OCI-LY7 (cell line): ENCODE measurements at regions of chr1 and their contacts with region 1.

Region 1: DNA sequence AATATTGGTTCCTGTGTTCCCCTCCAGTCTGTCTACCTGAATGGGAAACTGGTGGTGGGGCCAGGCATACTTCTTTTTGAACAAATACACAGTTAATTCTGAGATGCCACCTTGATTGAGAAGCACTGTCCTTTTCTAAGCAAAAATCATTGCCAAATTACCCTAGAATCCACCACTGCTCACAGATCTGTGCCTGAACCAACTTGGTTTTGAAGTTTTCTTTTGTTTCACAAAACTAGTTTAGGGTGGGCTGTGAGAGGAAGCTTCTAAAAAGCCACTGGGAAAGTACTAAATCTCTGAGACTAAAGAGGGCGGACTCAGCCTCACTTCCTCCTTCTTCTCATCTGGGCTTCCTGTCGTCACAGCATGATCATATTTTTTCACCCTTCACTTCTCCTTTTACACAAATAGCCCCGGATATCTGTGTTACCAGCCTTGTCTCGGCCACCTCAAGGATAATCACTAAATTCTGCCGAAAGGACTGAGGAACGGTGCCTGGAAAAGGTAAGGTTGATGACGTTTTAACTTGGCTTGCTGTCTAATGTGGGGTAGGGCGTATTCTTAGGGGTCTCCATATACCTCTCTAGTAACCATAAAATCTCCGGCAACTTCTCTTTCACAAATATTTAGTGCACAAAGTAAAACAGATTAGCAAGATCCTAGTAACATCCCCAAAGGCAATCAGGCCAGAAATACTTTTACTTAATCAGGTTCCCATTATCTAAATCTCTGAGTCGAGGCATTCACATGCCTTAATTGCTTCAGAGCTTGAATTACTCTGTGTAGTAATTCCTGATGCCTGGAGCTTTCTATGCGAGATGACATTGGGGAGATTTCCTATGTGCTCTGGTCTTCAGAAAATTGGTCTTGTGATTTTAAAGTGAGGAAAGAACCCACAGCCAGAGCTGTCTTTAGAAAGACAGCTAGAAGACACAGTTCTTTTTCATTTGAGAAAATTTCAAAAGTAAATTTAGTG is at the start of gene CD53:
- DNase-seq: peak; percentile 91
- H3K4me3 ChIP-seq: peak within 1 kb of the TSS; percentile 82
- H3K27ac ChIP-seq: peak within 1 kb of the TSS; percentile 98
- H3K4me1 ChIP-seq: peaks cover 60% of the 10 kb centered on the region
- CTCF ChIP-seq: no peak
- total RNA-seq, gene CD53: 119 and 134 TPM in 2 replicates

Region 2: DNA sequence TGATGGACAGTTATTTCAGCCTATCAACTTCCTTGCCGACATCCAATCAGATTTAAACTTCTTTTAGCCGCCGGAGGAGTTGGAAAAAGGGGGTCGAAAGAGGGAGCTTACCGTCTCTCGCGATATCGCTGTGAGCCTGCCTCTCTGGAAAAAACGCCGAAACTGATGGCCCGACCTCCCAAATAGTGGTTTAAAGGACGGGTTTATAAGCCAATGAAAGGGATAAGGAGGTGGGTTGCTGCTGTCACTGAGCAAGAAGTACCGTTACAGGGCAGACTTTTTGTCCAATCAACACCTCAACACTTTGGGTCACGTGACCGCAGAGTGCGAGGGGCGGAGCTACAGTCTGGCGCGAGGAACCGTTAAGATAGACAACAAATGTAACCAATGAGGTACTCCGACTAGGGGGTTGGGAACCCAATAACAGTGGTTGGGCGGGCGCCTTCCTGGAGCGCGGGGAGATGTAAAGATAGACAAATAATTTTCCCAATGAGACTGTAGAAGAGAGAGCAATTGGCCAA is 534.1 kb before region 1 on chr1 and contains the start of gene RBM15:
- CTCF ChIA-PET with region 1: no interaction called
- POLR2A ChIA-PET with region 1: no interaction called
- intact Hi-C with region 1: loop called (anchors 10 kb)
- DNase-seq: peak; percentile 100
- H3K4me3 ChIP-seq: peak within 1 kb of the TSS; percentile 93
- H3K27ac ChIP-seq: peak within 1 kb of the TSS; percentile 92
- H3K4me1 ChIP-seq: peaks cover 28% of the 10 kb centered on the region
- CTCF ChIP-seq: no peak
- total RNA-seq, gene RBM15: 221 and 231 TPM in 2 replicates

Region 3: GRCh38 chr1:110639724-110640386 is 233.2 kb before region 1 on chr1:
- CTCF ChIA-PET with region 1: interaction called, 3 read pairs
- POLR2A ChIA-PET with region 1: interaction called, 8 read pairs
- intact Hi-C with region 1: loop called (anchors 2 kb)
- DNase-seq: no peak
- H3K4me3 ChIP-seq: no peak overlapping the region
- H3K27ac ChIP-seq: no peak overlapping the region
- H3K4me1 ChIP-seq: peaks cover 72% of the 10 kb centered on the region
- CTCF ChIP-seq: no peak

Region 4: GRCh38 chr1:110787328-110788071 is 85.5 kb before region 1 on chr1:
- CTCF ChIA-PET with region 1: interaction called, 3 read pairs
- POLR2A ChIA-PET with region 1: interaction called, 14 read pairs
- intact Hi-C with region 1: loop called (anchors 2 kb)
- DNase-seq: peak; percentile 82
- H3K4me3 ChIP-seq: peak overlapping the region; percentile 47
- H3K27ac ChIP-seq: peak overlapping the region; percentile 80
- H3K4me1 ChIP-seq: peaks cover 30% of the 10 kb centered on the region
- CTCF ChIP-seq: peak; percentile 37; the same call in 1 of the 2 replicates

Region 5: DNA sequence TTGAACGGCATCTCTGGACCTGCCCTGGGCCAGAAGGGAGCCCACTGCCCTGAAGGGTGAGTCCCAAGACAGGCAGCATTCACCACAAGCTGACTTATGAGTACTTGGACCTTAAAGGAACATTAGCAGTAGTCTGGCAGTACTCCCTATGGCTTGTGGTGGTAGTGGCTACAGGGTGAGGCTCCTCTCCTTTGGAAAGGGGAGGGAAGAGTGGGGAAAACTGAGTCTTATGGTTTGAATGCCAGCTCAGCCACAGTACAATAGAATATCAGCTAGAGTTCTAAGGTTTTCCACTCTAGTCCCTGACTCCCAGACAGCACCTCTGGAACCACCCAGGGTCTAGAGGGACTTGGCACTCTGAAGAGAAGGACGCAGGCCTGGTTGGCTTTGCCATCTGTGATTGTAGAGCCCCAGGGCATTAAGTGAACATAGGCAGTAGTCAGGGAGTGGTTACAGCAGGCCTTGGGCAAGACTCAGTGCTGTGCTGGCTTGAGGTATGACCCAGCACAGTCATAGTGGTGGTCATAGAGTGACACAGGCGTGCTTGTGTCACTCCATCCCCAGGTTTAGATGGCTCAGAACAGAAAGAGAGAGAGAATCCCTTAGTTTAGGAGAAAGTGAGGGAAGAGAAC is 30.9 kb after region 1 on chr1:
- CTCF ChIA-PET with region 1: no interaction called
- POLR2A ChIA-PET with region 1: no interaction called
- intact Hi-C with region 1: no loop called
- DNase-seq: no peak
- H3K4me3 ChIP-seq: no peak overlapping the region
- H3K27ac ChIP-seq: no peak overlapping the region
- H3K4me1 ChIP-seq: peaks cover 4% of the 10 kb centered on the region
- CTCF ChIP-seq: no peak

Region 6: GRCh38 chr1:111127923-111128643 is 255.1 kb after region 1 on chr1:
- CTCF ChIA-PET with region 1: no interaction called
- POLR2A ChIA-PET with region 1: interaction called, 3 read pairs
- intact Hi-C with region 1: loop called (anchors 5 kb)
- DNase-seq: peak; percentile 91
- H3K4me3 ChIP-seq: peak overlapping the region; percentile 65
- H3K27ac ChIP-seq: peak overlapping the region; percentile 98
- H3K4me1 ChIP-seq: peaks cover 95% of the 10 kb centered on the region
- CTCF ChIP-seq: no peak

Region 7: DNA sequence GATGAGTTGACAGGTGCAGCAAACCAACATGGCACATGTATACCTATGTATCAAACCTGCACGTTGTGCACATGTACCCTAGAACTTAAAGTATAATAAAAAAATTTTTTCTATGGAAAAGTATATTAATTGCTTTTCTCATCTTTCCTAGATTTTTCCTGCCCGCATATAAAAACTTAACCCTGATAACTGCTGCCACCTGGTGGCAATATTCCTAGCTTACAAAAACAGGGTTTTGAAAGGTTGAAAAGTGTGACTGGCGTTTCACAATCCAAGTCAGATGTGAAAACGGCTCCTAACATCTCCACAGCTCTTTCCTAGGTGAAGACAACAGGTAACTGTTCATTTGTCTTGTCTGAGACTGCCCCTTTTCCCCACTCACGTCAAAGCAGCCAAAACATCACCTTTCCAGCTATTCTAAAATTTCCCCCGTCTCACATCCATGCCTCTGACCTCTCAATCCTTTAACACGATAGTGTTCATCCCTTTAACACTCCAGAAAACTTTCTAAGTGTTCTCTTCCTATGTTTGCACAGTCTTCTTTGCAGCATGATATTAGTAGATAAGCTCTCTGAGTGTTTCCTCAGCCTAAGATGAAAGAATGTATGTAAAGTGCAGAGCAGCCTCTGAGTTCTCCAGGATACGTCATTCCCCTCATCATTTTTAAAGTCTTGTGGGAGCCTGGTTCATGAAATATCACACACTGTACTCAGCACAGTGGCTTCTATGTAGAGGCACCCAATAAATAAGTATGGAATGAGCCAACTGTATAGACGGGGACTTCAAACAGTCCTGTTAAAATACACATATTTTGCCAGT is 527.0 kb after region 1 on chr1:
- CTCF ChIA-PET with region 1: no interaction called
- POLR2A ChIA-PET with region 1: no interaction called
- intact Hi-C with region 1: loop called (anchors 10 kb)
- DNase-seq: peak; percentile 67
- H3K4me3 ChIP-seq: no peak overlapping the region
- H3K27ac ChIP-seq: no peak overlapping the region
- H3K4me1 ChIP-seq: peaks cover 25% of the 10 kb centered on the region
- CTCF ChIP-seq: peak; percentile 86

Region 8: DNA sequence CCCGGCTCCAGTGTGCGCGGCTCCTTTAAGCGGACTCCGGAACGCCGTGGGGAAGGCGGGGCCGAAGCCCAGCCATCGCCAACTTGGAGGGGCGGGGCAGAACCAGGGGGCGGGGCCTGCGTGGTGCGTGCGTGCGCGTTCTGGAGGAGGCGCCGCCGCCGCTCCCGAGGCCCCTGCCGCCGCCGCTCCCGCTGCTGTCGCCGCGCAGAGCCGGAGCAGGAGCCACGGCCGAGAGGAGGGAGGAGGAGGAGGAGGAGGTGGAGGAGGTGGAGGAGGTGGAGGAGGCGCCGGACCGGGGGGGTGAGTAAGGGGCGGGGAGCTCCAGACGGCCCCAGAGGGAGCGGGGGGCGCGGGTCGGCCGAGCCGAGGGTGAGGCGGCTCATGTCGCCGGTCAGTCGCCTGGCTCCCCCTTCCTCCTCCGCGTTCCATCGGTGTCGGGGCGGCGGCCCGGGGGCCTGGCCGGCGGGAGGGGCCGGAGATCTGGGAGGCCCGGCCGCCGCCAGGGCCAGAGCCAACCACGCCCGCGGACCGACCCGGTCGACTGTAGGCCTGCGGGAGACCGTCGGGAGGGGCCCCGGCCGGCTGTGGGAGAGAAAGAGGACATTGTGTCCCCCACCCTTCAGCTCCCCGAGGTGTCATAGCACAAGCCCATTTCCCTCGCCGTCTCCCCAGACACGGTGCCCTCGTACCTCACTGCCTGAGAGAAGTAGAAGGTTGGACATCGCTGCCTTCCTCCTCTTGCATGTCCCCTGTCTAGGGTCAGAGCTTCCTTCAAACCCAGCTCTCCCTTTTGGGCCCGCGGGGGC is 746.8 kb after region 1 on chr1 and contains the start of gene RAP1A:
- CTCF ChIA-PET with region 1: no interaction called
- POLR2A ChIA-PET with region 1: no interaction called
- intact Hi-C with region 1: loop called (anchors 10 kb)
- DNase-seq: peak; percentile 92
- H3K4me3 ChIP-seq: peak within 1 kb of the TSS; percentile 94
- H3K27ac ChIP-seq: peak within 1 kb of the TSS; percentile 53
- H3K4me1 ChIP-seq: peaks cover 79% of the 10 kb centered on the region
- CTCF ChIP-seq: no peak
- total RNA-seq, gene RAP1A: 8.5 and 10.4 TPM in 2 replicates